ENCODE measurements at regions of chr3 and their contacts with region 1.

Region 1: DNA sequence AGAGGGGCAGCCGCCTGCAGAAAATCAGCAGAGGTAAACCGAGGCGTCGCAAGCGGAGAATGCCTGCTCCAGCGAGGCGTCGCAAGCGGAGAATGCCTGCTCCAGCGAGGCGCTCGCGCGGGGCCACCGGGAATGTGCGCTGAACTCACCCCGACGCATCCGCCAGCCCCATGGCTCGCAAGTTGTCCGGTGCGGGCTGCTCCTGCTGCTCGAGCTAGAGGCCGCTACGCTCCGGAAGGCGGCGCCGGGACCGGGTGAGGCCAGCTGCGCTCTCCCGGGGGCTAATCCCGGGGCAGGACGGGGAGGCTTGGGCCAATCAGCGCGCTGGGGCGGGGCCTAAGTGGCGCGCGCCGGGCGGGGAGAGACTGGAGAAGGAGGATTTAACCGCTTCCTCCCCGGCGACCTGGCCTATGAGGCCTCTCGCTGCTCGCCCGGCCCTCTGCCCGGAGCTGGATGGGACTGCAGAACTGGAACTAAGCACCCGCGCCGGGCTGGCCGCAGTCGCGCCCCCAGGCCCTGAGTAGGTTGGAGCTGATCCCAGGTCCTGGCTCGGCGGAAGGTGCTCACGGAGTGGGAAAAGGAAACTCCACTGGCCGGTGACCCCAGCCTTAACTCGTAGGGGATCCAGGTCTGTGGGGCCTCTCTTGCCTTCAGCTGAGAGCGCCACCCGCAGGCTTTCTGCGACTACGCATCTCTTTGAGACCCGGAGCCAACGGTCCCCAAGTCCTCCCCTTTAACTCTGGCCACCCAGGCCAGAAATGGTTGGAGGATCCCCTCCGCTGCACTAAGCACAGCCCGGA is at the start of gene SLC26A6:
- DNase-seq: peak; percentile 97
- H3K4me3 ChIP-seq: peak within 1 kb of the TSS; percentile 71 to 94 (median 82)
- H3K27ac ChIP-seq: peak within 1 kb of the TSS; percentile 33
- H3K4me1 ChIP-seq: peaks cover 14% of the 10 kb centered on the region
- H3K27me3 ChIP-seq: no peaks in the 10 kb centered on the region
- CTCF ChIP-seq: peak; percentile 40 to 67
- total RNA-seq, gene SLC26A6: 29.5 to 47.7 TPM

Region 2: DNA sequence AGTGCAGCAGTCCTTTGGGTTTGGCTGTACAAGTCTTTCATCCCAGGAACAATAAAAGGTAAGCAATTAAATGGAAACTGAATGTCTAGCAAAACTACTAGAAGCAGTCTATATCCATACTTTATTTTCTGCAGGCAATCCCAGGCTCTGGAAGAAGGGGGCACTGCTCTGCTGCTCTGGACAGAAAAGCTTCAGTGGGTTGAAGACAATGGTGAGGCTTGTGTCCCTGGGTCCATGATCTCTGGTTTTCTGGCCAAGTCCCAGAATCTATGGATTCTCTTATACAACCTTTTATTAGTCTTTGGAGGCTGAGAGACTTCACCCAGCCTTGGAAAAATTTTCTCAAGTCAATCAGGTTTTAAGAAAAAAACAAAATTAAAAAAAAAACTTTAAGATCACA is 1195.3 kb before region 1 on chr3:
- CTCF ChIA-PET with region 1: no interaction called
- dilution Hi-C with region 1: no loop called
- in situ Hi-C with region 1: no loop called
- intact Hi-C with region 1: no loop called
- DNase-seq: no peak
- H3K4me3 ChIP-seq: no peak overlapping the region
- H3K27ac ChIP-seq: no peak overlapping the region
- H3K4me1 ChIP-seq: peaks cover 29% of the 10 kb centered on the region
- H3K27me3 ChIP-seq: no peaks in the 10 kb centered on the region
- CTCF ChIP-seq: peak; percentile 15 to 53

Region 3: DNA sequence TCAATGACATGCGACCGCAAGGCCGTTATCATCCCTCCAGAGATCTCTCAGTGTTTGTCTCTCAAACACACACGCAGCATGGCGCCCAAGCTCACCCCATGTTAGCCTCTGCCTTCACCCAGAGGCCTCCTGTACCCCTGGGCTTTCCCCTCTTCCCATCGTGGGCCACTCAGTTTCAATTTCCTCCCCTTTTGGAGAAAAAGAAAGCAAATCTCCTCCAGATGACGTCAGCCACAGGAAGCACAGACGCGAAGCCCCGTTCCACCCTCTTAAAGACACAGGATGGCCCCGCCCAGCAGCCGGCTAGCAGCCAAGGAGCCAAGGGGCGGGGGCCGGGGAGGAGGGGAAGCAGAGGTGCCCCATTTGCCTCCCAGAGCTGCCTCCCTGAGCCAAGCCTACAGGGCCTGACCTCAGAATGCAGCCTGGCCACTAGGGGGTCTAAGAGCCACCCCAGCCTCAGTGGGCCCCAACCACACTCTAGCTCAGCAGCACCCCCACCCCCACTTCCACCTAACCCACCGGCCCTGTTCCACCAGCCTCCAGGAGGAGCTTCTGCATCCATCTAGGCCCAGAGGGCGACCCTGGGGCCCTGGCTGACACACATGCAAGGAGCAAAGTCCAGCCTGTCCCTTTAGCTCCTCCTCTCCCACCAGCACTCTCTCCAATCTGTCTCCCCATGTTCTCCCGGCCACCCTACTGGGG is 162.4 kb before region 1 on chr3:
- CTCF ChIA-PET with region 1: no interaction called
- dilution Hi-C with region 1: loop called (anchors 5 kb)
- in situ Hi-C with region 1: no loop called
- intact Hi-C with region 1: loop called (anchors 10 kb)
- DNase-seq: peak; percentile 89
- H3K4me3 ChIP-seq: peak overlapping the region; percentile 50 to 96 (median 76)
- H3K27ac ChIP-seq: peak overlapping the region; percentile 91
- H3K4me1 ChIP-seq: peaks cover 11% of the 10 kb centered on the region
- H3K27me3 ChIP-seq: no peaks in the 10 kb centered on the region
- CTCF ChIP-seq: peak in 1 of 2 donors; percentile 48

Region 4: DNA sequence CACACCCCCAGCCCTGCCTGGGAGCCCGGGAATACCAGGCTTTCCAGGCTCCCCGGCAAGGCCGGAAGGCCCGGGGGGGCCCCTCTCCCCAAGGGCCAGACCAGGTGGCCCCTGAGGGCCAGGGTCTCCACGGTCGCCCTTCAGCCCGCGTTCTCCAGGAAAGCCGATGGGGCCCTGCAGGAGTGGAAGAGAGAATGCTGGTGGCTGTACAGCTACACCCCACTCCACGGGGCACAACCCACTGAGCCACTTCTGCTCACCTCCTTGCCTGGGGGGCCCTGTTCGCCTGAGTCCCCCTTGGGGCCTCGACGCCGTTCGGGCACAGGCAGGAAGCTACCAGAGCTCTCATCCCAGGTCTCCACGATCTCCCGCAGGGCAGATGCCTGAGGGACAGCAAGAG is 60.1 kb before region 1 on chr3:
- CTCF ChIA-PET with region 1: no interaction called
- dilution Hi-C with region 1: loop called (anchors 5 kb)
- in situ Hi-C with region 1: no loop called
- intact Hi-C with region 1: no loop called
- DNase-seq: no peak
- H3K4me3 ChIP-seq: no peak overlapping the region
- H3K27ac ChIP-seq: no peak overlapping the region
- H3K4me1 ChIP-seq: no peaks in the 10 kb centered on the region
- H3K27me3 ChIP-seq: no peaks in the 10 kb centered on the region
- CTCF ChIP-seq: no peak

Region 5: GRCh38 chr3:48592282-48593087 is 42.9 kb before region 1 on chr3:
- CTCF ChIA-PET with region 1: no interaction called
- dilution Hi-C with region 1: no loop called
- in situ Hi-C with region 1: no loop called
- intact Hi-C with region 1: no loop called
- DNase-seq: no peak
- H3K4me3 ChIP-seq: peak overlapping the region in 1 of 3 experiments; percentile 79
- H3K27ac ChIP-seq: no peak overlapping the region
- H3K4me1 ChIP-seq: peaks cover 53% of the 10 kb centered on the region
- H3K27me3 ChIP-seq: no peaks in the 10 kb centered on the region
- CTCF ChIP-seq: no peak

Region 6: GRCh38 chr3:48609088-48610005 is 26.1 kb before region 1 on chr3 and contains the start of gene UQCRC1:
- CTCF ChIA-PET with region 1: interaction called, 7 read pairs
- dilution Hi-C with region 1: no loop called
- in situ Hi-C with region 1: no loop called
- intact Hi-C with region 1: loop called (anchors 1 kb)
- DNase-seq: peak; percentile 89
- H3K4me3 ChIP-seq: peak within 1 kb of the TSS; percentile 46 to 99 (median 87)
- H3K27ac ChIP-seq: peak within 1 kb of the TSS; percentile 60
- H3K4me1 ChIP-seq: peaks cover 19% of the 10 kb centered on the region
- H3K27me3 ChIP-seq: no peaks in the 10 kb centered on the region
- CTCF ChIP-seq: peak; percentile 24 to 69
- total RNA-seq, gene UQCRC1: 321 to 490 TPM

Region 7: GRCh38 chr3:48656061-48656840 is 20.8 kb after region 1 on chr3:
- CTCF ChIA-PET with region 1: no interaction called
- dilution Hi-C with region 1: no loop called
- in situ Hi-C with region 1: no loop called
- intact Hi-C with region 1: loop called (anchors 1 kb)
- DNase-seq: peak; percentile 74
- H3K4me3 ChIP-seq: peak overlapping the region in 2 of 3 experiments; percentile 43
- H3K27ac ChIP-seq: no peak overlapping the region
- H3K4me1 ChIP-seq: peaks cover 8% of the 10 kb centered on the region
- H3K27me3 ChIP-seq: no peaks in the 10 kb centered on the region
- CTCF ChIP-seq: peak; percentile 52 to 64

Region 8: GRCh38 chr3:48966876-48967361 is 331.5 kb after region 1 on chr3:
- CTCF ChIA-PET with region 1: no interaction called
- dilution Hi-C with region 1: no loop called
- in situ Hi-C with region 1: no loop called
- intact Hi-C with region 1: no loop called
- DNase-seq: peak; percentile 63
- H3K4me3 ChIP-seq: no peak overlapping the region
- H3K27ac ChIP-seq: no peak overlapping the region
- H3K4me1 ChIP-seq: no peaks in the 10 kb centered on the region
- H3K27me3 ChIP-seq: no peaks in the 10 kb centered on the region
- CTCF ChIP-seq: no peak